ENCODE measurements at regions of chr7 and their contacts with region 1.

Region 1: GRCh38 chr7:17948503-17949238 is 8.4 kb upstream of the SNX13 start:
- DNase-seq: no peak
- H3K4me3 Mint-ChIP-seq: no peak overlapping the region
- H3K27ac Mint-ChIP-seq: no peak overlapping the region
- H3K4me1 Mint-ChIP-seq: peaks cover 11% of the 10 kb centered on the region
- H3K27me3 Mint-ChIP-seq: no peaks in the 10 kb centered on the region
- CTCF ChIP-seq: no peak

Region 2: DNA sequence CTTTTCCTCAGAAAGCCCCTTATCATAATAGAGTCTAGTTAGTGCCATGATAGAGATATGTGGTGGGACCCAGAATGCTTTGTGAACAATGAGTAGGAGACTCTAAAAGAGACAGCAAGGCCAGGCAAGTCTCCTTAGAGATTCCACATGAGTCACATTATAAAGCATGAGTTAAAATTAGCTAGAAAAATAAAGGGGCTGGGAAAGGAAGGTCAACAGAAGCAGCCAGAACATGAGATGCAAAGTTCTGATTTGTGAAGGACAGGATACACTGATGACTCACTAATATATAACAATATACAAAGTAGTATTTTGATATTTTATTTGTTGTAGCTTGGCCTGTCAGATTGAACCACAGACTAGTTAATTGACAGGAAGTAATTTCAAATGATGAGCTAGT is 16.9 kb after region 1 on chr7:
- CTCF ChIA-PET with region 1: interaction called, 3 read pairs
- intact Hi-C with region 1: loop called (anchors 2 kb)
- DNase-seq: no peak
- H3K4me3 Mint-ChIP-seq: no peak overlapping the region
- H3K27ac Mint-ChIP-seq: no peak overlapping the region
- H3K4me1 Mint-ChIP-seq: peaks cover 12% of the 10 kb centered on the region
- H3K27me3 Mint-ChIP-seq: no peaks in the 10 kb centered on the region
- CTCF ChIP-seq: no peak

Measured in Calu3 (cell line).